Aorta (tissue), 5 donors: ENCODE measurements at regions of chr1 and their contacts with region 1.

Region 1: GRCh38 chr1:8848663-8849386 is 29.7 kb downstream of the ENO1 start:
- DNase-seq: peak; percentile 94 to 96
- ATAC-seq: peak; percentile 95
- H3K4me3 ChIP-seq: no peak overlapping the region
- H3K27ac ChIP-seq: no peak overlapping the region
- H3K4me1 ChIP-seq: no peaks in the 10 kb centered on the region
- H3K27me3 ChIP-seq: no peaks in the 10 kb centered on the region

Region 2: GRCh38 chr1:8554956-8555534 is 293.8 kb before region 1 on chr1:
- intact Hi-C with region 1: loop called in 1 of 2 experiments (anchors 5 kb)
- DNase-seq: no peak
- ATAC-seq: no peak
- H3K4me3 ChIP-seq: no peak overlapping the region
- H3K27ac ChIP-seq: no peak overlapping the region
- H3K4me1 ChIP-seq: peaks cover 0 to 3% of the 10 kb centered on the region in 2 donors
- H3K27me3 ChIP-seq: no peaks in the 10 kb centered on the region

Region 3: DNA sequence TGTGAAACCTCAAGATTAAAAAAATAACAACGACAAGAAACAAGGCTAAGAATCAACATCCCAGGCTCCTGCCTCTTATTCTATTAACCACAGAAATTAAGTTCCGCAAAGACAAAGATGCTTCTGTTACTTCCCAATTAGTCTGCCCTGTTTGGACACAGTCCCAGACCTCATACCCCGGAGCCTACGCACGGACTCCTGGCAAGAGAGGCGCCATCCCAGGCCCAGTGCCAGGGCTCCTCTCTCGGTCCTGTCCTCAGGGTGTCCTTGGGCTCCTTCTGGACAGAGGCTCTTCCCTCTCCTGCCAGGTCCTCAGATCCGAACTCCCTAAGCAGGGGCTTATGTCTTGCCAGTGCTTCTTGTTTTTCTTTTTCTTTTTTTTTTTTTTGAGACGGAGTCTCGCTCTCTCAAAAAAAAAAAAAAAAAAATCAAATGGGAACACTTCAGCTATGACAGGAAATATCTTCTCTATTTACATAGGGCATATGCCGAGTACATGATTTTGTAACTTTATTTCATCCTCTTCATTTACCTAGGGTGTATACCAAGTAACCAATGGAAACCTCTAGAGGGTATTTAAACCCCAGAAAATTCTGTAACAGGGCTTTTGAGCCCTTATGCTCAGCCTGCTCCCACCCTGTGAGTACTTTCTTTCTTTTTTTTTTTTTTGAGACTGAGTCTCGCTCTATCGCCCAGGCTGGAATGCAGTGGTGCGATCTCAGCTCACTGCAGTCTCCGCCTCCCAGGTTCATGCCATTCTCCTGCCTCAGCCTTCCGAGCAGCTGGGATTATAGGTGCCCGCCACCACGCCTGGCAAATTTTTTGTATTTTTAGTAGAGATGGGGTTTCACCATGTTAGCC is 41.3 kb after region 1 on chr1:
- intact Hi-C with region 1: no loop called
- DNase-seq: peak; percentile 89 to 93
- ATAC-seq: peak; percentile 89
- H3K4me3 ChIP-seq: no peak overlapping the region
- H3K27ac ChIP-seq: peak overlapping the region; percentile 9 to 91
- H3K4me1 ChIP-seq: no peaks in the 10 kb centered on the region
- H3K27me3 ChIP-seq: no peaks in the 10 kb centered on the region